A549 (cell line): ENCODE measurements at regions of chr16 and their contacts with region 1.

Region 1: DNA sequence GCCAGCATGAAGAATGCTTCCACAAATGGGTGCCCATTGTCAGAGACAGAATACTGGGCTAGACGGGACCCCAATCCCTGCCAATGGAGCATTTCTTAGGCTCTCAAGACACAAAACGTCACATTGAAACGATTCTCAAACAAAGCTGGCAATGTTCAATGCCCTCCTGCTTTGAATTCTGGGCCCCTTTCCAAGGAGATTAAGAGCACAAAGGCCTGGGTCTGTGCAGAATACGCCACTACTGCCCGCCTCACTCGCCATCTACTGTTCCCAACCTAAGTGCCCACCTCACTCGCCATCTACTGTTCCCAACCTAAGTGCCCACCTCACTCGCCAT is 9.7 kb downstream of the CFAP20 start:
- DNase-seq: no peak
- ATAC-seq: no peak
- H3K4me3 ChIP-seq: no peak overlapping the region
- H3K27ac ChIP-seq: no peak overlapping the region
- H3K4me1 ChIP-seq: peaks cover 13% of the 10 kb centered on the region
- CTCF ChIP-seq: no peak
- EP300 ChIP-seq: no peak
- POLR2A ChIP-seq: no peak
- RAD21 ChIP-seq: no peak

Region 2: GRCh38 chr16:57938936-57939871 is 180.3 kb before region 1 on chr16:
- CTCF ChIA-PET with region 1: no interaction called
- POLR2A ChIA-PET with region 1: no interaction called
- DNase-seq: peak; percentile 35 to 36
- ATAC-seq: peak; percentile 63 to 82
- H3K4me3 ChIP-seq: no peak overlapping the region
- H3K27ac ChIP-seq: no peak overlapping the region
- H3K4me1 ChIP-seq: peaks cover 15% of the 10 kb centered on the region
- CTCF ChIP-seq: peak; percentile 18; the same call in 1 of the 3 replicates
- EP300 ChIP-seq: no peak
- POLR2A ChIP-seq: no peak
- RAD21 ChIP-seq: 0 out of 5 replicates have a peak, but pooled peaks of 1 of the 2 experiments have one; percentile 6

Region 3: GRCh38 chr16:58012481-58012880 is 107.0 kb before region 1 on chr16:
- CTCF ChIA-PET with region 1: interaction called, 13 read pairs
- POLR2A ChIA-PET with region 1: no interaction called
- DNase-seq: no peak
- ATAC-seq: no peak; a peak in 1 of 6 replicates
- H3K4me3 ChIP-seq: no peak overlapping the region
- H3K27ac ChIP-seq: no peak overlapping the region
- H3K4me1 ChIP-seq: peaks cover 23% of the 10 kb centered on the region
- CTCF ChIP-seq: no peak
- EP300 ChIP-seq: no peak
- POLR2A ChIP-seq: no peak
- RAD21 ChIP-seq: no peak

Region 4: DNA sequence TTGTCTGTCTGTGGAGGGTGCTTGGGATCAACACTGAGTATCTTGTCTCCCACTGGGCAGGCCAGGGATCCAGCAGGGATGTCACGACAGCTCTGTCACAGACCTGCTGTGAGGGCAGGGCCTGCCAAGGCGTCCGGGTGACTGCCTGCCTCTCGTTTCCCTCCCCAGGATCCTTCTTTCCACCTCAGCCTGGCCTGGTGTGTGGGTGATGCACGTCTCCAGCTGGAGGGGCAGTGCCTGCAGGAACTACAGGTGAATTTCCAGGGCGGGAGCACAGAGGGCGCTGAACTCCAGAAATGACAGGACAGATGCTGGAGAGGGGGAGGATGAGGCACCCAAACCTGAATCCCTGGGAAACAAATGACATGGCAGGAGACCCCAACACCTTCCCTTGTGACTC is 100.7 kb before region 1 on chr16:
- CTCF ChIA-PET with region 1: interaction called, 37 read pairs
- POLR2A ChIA-PET with region 1: no interaction called
- DNase-seq: no peak
- ATAC-seq: peak in 1 of 2 experiments; percentile 41; a peak in 2 of 6 replicates
- H3K4me3 ChIP-seq: no peak overlapping the region
- H3K27ac ChIP-seq: no peak overlapping the region
- H3K4me1 ChIP-seq: peaks cover 13% of the 10 kb centered on the region; the same call in 1 of the 3 replicates
- CTCF ChIP-seq: 0 out of 3 replicates have a peak, but pooled peaks have one; percentile 6
- EP300 ChIP-seq: no peak
- POLR2A ChIP-seq: no peak
- RAD21 ChIP-seq: no peak

Region 5: DNA sequence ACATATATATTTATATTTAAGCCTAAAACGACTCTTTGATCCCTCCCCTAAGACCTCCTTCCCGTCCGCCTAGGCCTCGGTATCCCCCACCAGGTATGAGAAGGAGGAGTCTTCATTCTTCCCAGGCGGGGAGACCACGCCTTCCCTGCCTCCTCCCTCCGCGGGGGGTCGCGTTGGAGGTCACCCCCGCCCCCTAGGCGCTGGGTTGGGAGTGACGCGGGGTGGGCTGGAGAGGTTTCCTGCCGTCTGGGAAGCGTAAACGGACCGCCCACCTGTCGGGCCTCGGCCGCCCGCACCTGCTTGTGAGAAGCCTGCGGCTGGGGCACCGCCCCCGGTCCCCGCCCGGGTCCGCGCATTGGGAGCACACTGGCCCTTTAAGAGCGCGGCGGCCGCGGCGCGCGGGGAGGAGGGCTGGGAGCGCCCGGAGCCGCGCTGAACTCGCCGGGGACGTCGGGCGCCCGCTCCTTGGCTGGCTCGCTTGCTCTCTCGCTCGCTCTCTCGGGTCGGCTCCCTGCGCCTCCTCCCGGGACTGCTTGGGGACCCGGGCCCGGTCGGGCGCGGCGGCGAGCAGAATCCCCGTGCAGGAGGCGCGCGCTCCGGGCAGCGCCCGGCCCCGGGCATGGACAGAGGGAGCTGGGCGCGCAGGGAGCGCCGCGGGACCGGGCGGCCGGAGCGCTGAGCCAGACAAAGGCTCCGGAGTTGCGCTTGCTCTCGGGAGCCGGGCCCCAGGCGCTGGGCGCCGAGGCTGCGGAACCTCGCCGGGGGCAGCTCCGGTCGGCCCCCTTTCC is 93.9 kb before region 1 on chr16 and contains the start of gene MMP15:
- CTCF ChIA-PET with region 1: interaction called, 31 read pairs
- POLR2A ChIA-PET with region 1: no interaction called
- DNase-seq: peak; percentile 75 to 81
- ATAC-seq: peak; percentile 66 to 76
- H3K4me3 ChIP-seq: peak within 1 kb of the TSS; percentile 80
- H3K27ac ChIP-seq: peak within 1 kb of the TSS; percentile 79 to 84
- H3K4me1 ChIP-seq: peaks cover 20% of the 10 kb centered on the region; the same call in 1 of the 3 replicates
- CTCF ChIP-seq: no peak
- EP300 ChIP-seq: no peak
- POLR2A ChIP-seq: peak; percentile 72
- RAD21 ChIP-seq: no peak
- polyA plus RNA-seq, gene MMP15: 4.3 and 5.2 TPM in 2 replicates

Region 6: GRCh38 chr16:58032710-58033293 is 86.7 kb before region 1 on chr16:
- CTCF ChIA-PET with region 1: interaction called, 27 read pairs
- POLR2A ChIA-PET with region 1: no interaction called
- DNase-seq: no peak
- ATAC-seq: no peak
- H3K4me3 ChIP-seq: no peak overlapping the region
- H3K27ac ChIP-seq: no peak overlapping the region
- H3K4me1 ChIP-seq: peaks cover 8% of the 10 kb centered on the region; the same call in 2 of the 3 replicates
- CTCF ChIP-seq: no peak
- EP300 ChIP-seq: no peak
- POLR2A ChIP-seq: no peak
- RAD21 ChIP-seq: no peak

Region 7: GRCh38 chr16:58098207-58099096 is 21.0 kb before region 1 on chr16:
- CTCF ChIA-PET with region 1: interaction called, 25 read pairs
- POLR2A ChIA-PET with region 1: no interaction called
- DNase-seq: peak in 1 of 2 experiments; percentile 21
- ATAC-seq: peak; percentile 69 to 71
- H3K4me3 ChIP-seq: no peak overlapping the region
- H3K27ac ChIP-seq: peak overlapping the region; percentile 29 to 70; a peak in 4 of 6 replicates
- H3K4me1 ChIP-seq: peaks cover 15% of the 10 kb centered on the region
- CTCF ChIP-seq: no peak
- EP300 ChIP-seq: no peak
- POLR2A ChIP-seq: no peak
- RAD21 ChIP-seq: no peak